Transverse colon (tissue), 4 donors: ENCODE measurements at regions of chr10 and their contacts with region 1.

Region 1: GRCh38 chr10:125707541-125708468 is 11.7 kb upstream of the EDRF1 start:
- DNase-seq: no peak
- H3K4me3 ChIP-seq: no peak overlapping the region
- H3K27ac ChIP-seq: no peak overlapping the region
- H3K4me1 ChIP-seq: peaks cover 0 to 11% (median 5%) of the 10 kb centered on the region in 4 donors
- H3K27me3 ChIP-seq: no peaks in the 10 kb centered on the region
- CTCF ChIP-seq: no peak
- EP300 ChIP-seq: no peak
- POLR2A ChIP-seq: no peak

Region 2: DNA sequence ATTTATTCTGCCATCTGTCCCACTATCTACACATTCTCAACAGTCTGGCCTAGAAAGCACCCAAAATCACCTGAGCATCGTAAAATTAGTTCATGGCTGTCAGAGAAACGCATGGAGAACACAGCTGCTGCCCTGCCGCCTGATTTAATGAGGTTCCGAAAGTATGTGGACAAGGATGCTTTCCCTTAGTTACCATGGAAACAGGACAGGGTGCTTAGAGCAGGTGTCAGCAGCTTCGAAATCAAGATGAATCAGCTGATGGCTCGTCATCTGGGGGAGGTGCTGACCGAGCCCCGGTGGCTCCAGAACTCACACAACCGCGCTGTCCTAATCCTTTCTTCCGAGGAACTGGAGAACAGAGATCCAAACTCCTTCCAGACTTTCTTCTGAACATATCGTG is 176.3 kb before region 1 on chr10:
- in situ Hi-C with region 1: no loop called
- intact Hi-C with region 1: no loop called
- DNase-seq: no peak
- H3K4me3 ChIP-seq: no peak overlapping the region
- H3K27ac ChIP-seq: no peak overlapping the region
- H3K4me1 ChIP-seq: no peaks in the 10 kb centered on the region
- H3K27me3 ChIP-seq: no peaks in the 10 kb centered on the region
- CTCF ChIP-seq: no peak
- EP300 ChIP-seq: no peak
- POLR2A ChIP-seq: no peak

Region 3: DNA sequence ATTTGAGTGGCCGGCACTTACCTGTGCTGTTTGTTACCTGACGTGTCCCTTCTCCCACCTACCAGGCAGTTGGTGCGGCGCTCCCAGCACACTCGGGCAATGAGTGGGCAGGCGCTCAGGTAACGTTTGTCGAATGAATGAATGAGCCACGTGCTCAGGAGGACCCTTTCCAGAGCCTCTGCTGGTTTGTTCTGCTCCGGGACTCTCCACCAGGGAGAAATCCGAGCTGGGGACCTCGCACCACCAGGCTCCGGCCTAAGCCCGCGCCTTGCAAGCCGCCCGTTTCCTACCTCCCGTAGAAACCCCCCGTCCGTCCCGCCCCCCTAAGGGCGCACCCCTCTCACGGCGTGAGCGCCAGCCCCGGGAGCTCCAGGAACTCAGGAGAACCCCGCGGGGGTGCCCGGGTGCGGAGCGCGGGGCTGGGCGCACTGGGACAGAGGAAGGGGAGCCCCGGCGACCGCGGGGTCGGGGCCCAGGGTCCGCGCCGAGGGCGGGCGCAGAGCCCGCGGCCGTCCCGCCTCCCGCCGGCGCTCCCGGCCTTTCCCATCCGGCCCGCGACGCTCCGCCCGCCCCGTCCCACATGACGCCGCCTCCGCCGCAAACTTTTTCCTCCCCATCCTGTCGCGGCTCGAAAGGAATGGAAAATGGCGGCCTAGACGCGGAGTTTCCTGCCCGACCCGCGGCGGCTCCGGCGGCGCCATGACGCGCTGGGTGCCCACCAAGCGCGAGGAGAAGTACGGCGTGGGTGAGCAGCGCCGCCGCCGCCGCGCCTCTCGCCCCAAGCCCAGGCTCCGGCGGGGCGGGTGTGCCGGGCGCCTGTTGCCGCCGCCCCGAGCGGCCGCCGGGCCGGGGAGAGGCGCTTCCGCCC is 1197.2 kb after region 1 on chr10 and contains the start of gene DOCK1:
- in situ Hi-C with region 1: no loop called
- intact Hi-C with region 1: loop called (anchors 5 kb)
- DNase-seq: peak; percentile 74
- H3K4me3 ChIP-seq: peak within 1 kb of the TSS; percentile 74 to 98 (median 93)
- H3K27ac ChIP-seq: peak within 1 kb of the TSS; percentile 70 to 92 (median 84)
- H3K4me1 ChIP-seq: peaks cover 0 to 20% (median 15%) of the 10 kb centered on the region in 4 donors
- H3K27me3 ChIP-seq: no peaks in the 10 kb centered on the region
- CTCF ChIP-seq: no peak
- EP300 ChIP-seq: no peak
- POLR2A ChIP-seq: no peak
- total RNA-seq, gene DOCK1: 75.1 to 200 (median 92.5) TPM